Naive thymus-derived CD4-positive, alpha-beta T cell (primary cell): ENCODE measurements at regions of chr4 and their contacts with region 1.

Region 1: GRCh38 chr4:108466936-108467902 is 153.2 kb upstream of the RPL34 start:
- DNase-seq: peak in 7 of 9 donors; percentile 42 to 69 (median 61)
- ATAC-seq: peak; percentile 80
- H3K4me3 ChIP-seq: peak overlapping the region; percentile 22
- H3K4me3 Mint-ChIP-seq: peak overlapping the region; percentile 65 to 90 (median 82)
- H3K27ac ChIP-seq: peak overlapping the region; percentile 52
- H3K27ac Mint-ChIP-seq: peak overlapping the region; percentile 85 to 99 (median 95)
- H3K4me1 ChIP-seq: peaks cover 0 to 37% of the 10 kb centered on the region in 2 donors
- H3K4me1 Mint-ChIP-seq: peaks cover 22 to 74% (median 65%) of the 10 kb centered on the region in 7 donors
- H3K27me3 ChIP-seq: no peaks in the 10 kb centered on the region
- H3K27me3 Mint-ChIP-seq: no peaks in the 10 kb centered on the region

Region 2: GRCh38 chr4:108355186-108355901 is 111.9 kb before region 1 on chr4:
- CTCF ChIA-PET with region 1: interaction called, 7 read pairs
- POLR2A ChIA-PET with region 1: interaction called, 3 read pairs
- intact Hi-C with region 1: loop called (anchors 2 to 5 kb)
- DNase-seq: peak in 8 of 9 donors; percentile 28 to 92 (median 86)
- ATAC-seq: peak; percentile 90
- H3K4me3 ChIP-seq: peak overlapping the region; percentile 20
- H3K4me3 Mint-ChIP-seq: peak overlapping the region; percentile 57 to 87 (median 70)
- H3K27ac ChIP-seq: peak overlapping the region; percentile 86
- H3K27ac Mint-ChIP-seq: peak overlapping the region; percentile 76 to 99 (median 96)
- H3K4me1 ChIP-seq: peaks cover 17 to 59% of the 10 kb centered on the region in 2 donors
- H3K4me1 Mint-ChIP-seq: peaks cover 34 to 96% (median 83%) of the 10 kb centered on the region in 7 donors
- H3K27me3 ChIP-seq: no peaks in the 10 kb centered on the region
- H3K27me3 Mint-ChIP-seq: peaks cover 0 to 14% (median 0%) of the 10 kb centered on the region in 5 donors

Region 3: DNA sequence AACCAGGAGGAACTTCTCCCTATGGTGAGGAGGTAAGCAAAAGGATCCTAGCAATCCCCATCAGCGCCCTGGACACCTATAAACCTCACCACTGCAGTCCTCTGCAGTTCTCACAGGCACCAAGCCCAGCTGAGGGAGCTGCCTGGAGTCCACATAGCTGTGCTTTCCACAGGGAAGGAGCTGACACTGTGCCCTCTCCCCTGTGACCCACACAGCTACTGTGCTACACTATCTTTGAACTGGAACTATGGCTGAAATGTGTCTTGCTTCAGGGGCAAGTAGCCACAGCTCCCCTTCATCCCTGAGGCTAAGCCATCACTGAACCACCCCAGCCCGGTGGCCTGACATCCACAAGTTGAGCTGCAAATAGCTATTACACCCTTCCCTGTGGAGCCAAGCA is 55.4 kb before region 1 on chr4:
- CTCF ChIA-PET with region 1: no interaction called
- POLR2A ChIA-PET with region 1: no interaction called
- intact Hi-C with region 1: no loop called
- DNase-seq: no peak
- ATAC-seq: no peak
- H3K4me3 ChIP-seq: no peak overlapping the region
- H3K4me3 Mint-ChIP-seq: no peak overlapping the region
- H3K27ac ChIP-seq: no peak overlapping the region
- H3K27ac Mint-ChIP-seq: no peak overlapping the region
- H3K4me1 ChIP-seq: no peaks in the 10 kb centered on the region
- H3K4me1 Mint-ChIP-seq: peaks cover 0 to 14% (median 7%) of the 10 kb centered on the region in 7 donors
- H3K27me3 ChIP-seq: no peaks in the 10 kb centered on the region
- H3K27me3 Mint-ChIP-seq: peaks cover 0 to 27% (median 0%) of the 10 kb centered on the region in 5 donors

Region 4: DNA sequence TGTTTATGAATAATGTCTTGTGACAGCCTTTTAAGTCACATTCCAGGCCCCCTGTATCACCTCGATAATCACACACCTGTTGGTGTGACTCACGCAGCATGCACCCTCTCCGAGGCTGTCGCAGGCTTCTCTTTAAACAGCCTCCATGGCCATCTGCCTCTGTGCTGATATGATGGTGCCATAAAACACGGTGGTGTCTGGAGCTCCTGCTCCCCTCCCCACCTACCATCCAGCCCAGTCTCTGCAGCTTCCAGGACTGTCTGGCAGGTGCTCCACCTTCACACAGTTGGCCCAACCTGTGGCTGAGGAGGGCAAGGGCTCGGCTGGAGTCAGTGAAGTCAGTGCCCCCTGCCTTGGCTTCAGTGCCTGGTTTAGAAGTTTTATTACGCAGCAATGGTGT is 20.7 kb before region 1 on chr4:
- CTCF ChIA-PET with region 1: interaction called, 3 read pairs
- POLR2A ChIA-PET with region 1: interaction called, 4 read pairs
- intact Hi-C with region 1: loop called in 1 of 2 experiments (anchors 2 kb)
- DNase-seq: no peak
- ATAC-seq: no peak
- H3K4me3 ChIP-seq: no peak overlapping the region
- H3K4me3 Mint-ChIP-seq: no peak overlapping the region
- H3K27ac ChIP-seq: no peak overlapping the region
- H3K27ac Mint-ChIP-seq: peak overlapping the region in 1 of 9 donors; percentile 28
- H3K4me1 ChIP-seq: peaks cover 0 to 8% of the 10 kb centered on the region in 2 donors
- H3K4me1 Mint-ChIP-seq: peaks cover 9 to 50% (median 40%) of the 10 kb centered on the region in 7 donors
- H3K27me3 ChIP-seq: no peaks in the 10 kb centered on the region
- H3K27me3 Mint-ChIP-seq: peaks cover 0 to 8% (median 0%) of the 10 kb centered on the region in 5 donors

Region 5: DNA sequence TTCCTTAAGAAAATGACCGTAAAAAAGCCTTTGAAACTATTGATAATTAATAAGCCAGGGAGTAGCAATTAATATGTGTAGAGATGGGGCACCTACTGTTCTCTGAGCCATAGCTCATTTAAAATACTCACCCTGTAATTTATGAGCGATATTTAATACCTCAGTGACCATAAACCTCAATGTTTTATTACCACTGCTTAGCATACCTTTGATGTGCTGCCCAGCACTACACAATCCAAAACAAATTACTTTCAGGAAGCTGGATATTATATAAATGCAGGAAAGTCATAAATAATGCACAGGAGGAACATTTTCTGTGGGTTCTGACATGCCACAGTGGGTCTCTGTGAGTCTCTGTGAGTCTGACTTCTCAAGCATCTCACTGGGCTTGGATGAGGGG is 13.0 kb before region 1 on chr4:
- CTCF ChIA-PET with region 1: no interaction called
- POLR2A ChIA-PET with region 1: interaction called, 3 read pairs
- intact Hi-C with region 1: loop called in 1 of 2 experiments (anchors 1 kb)
- DNase-seq: no peak
- ATAC-seq: no peak
- H3K4me3 ChIP-seq: no peak overlapping the region
- H3K4me3 Mint-ChIP-seq: no peak overlapping the region
- H3K27ac ChIP-seq: no peak overlapping the region
- H3K27ac Mint-ChIP-seq: no peak overlapping the region
- H3K4me1 ChIP-seq: peaks cover 0 to 4% of the 10 kb centered on the region in 2 donors
- H3K4me1 Mint-ChIP-seq: peaks cover 3 to 17% (median 10%) of the 10 kb centered on the region in 7 donors
- H3K27me3 ChIP-seq: no peaks in the 10 kb centered on the region
- H3K27me3 Mint-ChIP-seq: peaks cover 0 to 34% (median 0%) of the 10 kb centered on the region in 5 donors

Region 6: GRCh38 chr4:108483079-108483478 is 15.9 kb after region 1 on chr4:
- CTCF ChIA-PET with region 1: no interaction called
- POLR2A ChIA-PET with region 1: interaction called, 5 read pairs
- intact Hi-C with region 1: loop called in 1 of 2 experiments (anchors 2 kb)
- DNase-seq: peak in 4 of 9 donors; percentile 10 to 31 (median 18)
- ATAC-seq: peak; percentile 31
- H3K4me3 ChIP-seq: peak overlapping the region; percentile 11
- H3K4me3 Mint-ChIP-seq: peak overlapping the region; percentile 38 to 82 (median 74)
- H3K27ac ChIP-seq: no peak overlapping the region
- H3K27ac Mint-ChIP-seq: peak overlapping the region in 8 of 9 donors; percentile 34 to 92 (median 68)
- H3K4me1 ChIP-seq: peaks cover 18 to 21% of the 10 kb centered on the region in 2 donors
- H3K4me1 Mint-ChIP-seq: peaks cover 26 to 47% (median 44%) of the 10 kb centered on the region in 7 donors
- H3K27me3 ChIP-seq: no peaks in the 10 kb centered on the region
- H3K27me3 Mint-ChIP-seq: no peaks in the 10 kb centered on the region